OCI-LY7 (cell line): ENCODE measurements at regions of chr5 and their contacts with region 1.

Region 1: DNA sequence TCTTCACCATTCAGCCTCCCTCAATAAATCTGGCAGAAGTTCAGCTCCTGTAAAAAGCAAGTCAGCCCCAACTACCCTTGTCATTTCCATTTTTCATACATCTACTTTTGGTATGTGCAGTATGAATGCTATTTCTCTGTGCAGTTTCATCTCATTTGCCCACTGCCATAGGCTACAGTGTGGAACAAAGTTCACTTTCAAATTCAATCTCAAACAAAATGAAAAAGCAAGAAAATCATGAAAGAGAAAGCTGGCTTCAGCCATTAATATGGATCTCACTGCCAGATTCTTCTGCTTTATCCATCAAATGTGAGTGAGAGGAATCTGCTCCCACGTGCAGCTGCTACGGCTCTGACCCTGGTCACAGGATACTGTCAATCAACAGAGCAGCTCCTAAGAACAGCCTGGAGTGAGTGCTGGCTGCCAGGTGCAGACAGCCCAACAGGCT is 494.2 kb downstream of the ZNF608 start:
- DNase-seq: peak; percentile 3
- H3K4me3 ChIP-seq: no peak overlapping the region
- H3K27ac ChIP-seq: no peak overlapping the region
- H3K4me1 ChIP-seq: no peaks in the 10 kb centered on the region
- CTCF ChIP-seq: no peak

Region 2: DNA sequence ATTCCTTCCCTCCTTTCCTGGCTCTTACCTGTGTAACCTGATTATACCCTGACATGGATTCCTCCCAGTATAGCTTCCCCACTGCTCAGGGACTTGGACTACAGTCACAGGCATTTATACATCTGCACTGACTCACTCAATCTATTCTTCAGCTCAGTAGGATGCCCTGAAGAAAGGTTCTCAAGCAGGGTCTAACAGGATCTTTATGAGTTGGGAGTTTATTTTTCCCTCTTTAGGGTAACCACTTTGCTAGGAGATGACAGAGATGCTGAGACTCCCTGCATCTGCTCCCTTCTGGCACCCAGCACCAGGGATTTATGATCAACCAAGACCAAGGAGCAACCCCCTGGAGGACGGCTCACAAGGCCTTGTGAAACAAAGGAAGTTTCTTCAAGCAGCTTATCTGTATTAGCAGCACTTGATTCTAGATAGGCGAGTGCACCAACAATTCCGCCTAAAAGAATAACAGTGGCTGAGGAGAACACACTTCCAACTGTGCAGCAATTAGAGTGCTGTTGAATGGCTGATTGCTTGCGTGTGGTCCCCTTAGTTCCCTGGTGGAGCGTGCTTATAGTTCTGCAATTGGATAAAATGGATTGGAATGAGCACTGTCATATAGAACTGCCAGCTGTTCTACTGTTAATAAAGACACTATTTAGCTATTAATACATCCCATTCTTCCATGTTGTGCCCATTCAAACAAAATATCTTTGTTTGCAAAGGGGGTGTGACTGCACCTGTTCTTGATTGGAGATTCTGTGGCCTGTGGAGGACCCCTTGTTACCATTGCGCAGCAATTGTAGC is 11.7 kb after region 1 on chr5:
- CTCF ChIA-PET with region 1: no interaction called
- POLR2A ChIA-PET with region 1: interaction called, 17 read pairs
- intact Hi-C with region 1: no loop called
- DNase-seq: no peak
- H3K4me3 ChIP-seq: no peak overlapping the region
- H3K27ac ChIP-seq: no peak overlapping the region
- H3K4me1 ChIP-seq: no peaks in the 10 kb centered on the region
- CTCF ChIP-seq: no peak